Right ventricle myocardium inferior (tissue), 1 donor: ENCODE measurements at regions of chr3 and their contacts with region 1.

Region 1: DNA sequence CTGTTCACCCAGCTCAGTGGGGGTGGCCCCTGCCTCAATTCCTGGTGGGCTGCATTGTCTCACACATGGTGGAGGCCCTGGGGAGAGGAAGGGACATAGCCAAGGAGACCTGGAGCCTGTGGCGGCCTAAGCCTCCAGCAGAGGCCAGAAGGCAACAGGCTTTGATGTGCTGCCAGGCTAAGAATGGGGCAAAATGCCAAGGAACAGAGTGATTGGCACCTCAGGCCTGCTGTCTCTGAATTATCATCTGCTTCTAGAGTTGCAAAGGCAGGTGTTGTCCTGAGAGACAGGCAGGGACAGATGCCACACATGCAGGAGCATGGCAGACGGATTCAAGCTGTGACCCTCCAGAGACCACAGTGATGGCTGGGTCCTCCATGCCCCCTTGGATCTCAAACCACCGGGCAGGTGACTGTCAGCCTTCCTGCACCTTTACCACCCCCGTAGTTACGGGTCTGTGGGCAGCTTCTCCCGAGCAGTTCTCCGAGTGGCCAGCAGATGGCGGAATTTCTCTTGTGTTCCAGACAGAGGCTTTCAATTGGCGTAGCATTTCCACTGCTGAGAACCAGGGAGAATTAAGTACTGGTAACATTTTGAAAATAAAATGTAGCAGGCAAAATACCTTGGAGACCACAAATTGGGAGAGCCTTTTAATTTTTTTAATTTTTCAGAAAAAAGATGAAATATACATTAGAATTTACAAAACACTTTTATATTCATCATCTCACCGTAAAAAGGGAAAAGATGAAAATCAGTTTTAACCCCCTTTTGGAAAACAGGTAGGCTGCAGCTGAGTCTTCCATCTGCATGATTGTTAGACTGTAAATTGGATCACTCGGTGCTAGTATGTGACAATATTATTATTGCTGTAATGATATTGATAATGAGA is 525.5 kb upstream of the CFAP20DC start:
- DNase-seq: peak; percentile 89
- ATAC-seq: peak; percentile 60

Region 2: DNA sequence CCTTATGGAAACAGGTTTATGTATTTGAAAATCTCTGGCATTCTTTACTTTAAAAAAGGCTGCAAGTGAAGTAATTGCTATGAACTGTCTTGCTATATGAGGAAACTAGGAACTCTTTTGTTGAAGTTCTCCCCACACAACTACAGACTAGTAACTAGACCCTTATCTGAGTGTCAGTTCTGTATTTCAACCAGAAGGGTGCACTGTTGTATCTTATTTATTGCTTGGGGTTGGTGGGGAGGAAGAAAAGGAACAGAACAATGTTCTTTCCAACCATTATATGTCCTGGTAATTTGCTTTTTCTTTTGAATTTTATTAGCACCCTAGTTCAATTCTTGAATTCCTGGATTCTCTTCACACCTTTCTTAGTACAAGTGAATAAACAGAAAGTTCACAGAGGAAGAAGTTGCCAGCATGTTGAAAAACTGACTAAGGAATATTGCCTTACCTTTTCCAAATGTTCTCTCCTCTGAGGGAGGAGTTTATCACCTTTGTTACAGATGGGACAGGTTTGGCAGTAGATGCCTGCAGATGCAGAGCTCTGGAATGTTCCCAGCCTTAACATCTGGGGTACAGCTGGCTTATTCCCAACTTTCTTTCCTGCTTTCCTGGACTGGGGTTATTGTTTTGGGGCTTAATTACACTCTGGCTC is 363.1 kb before region 1 on chr3:
- intact Hi-C with region 1: loop called (anchors 1 kb)
- DNase-seq: no peak
- ATAC-seq: peak; percentile 60

Region 3: DNA sequence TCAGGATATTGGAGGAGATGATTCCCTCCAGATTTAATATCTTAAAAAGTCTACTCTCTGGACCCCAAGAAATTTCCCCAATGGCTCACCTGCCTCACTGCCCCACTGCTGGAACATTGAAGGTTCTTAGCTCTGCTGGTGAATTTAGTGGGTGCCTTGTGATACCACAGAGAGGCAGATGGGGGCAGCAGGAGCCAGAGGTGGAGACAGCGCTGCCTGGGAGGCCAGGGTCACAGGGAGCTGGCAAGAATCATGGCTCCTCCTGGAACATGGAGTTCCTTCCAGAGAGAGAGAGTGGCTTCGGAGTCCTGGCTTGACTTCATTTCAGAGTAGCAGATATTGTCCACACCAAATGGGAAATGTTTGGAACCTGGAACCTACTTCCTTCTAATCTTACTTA is 262.0 kb before region 1 on chr3:
- intact Hi-C with region 1: loop called (anchors 5 kb)
- DNase-seq: peak; percentile 68
- ATAC-seq: peak; percentile 94

Region 4: GRCh38 chr3:59607656-59608055 is 32.3 kb after region 1 on chr3:
- intact Hi-C with region 1: loop called (anchors 2 kb)
- DNase-seq: no peak
- ATAC-seq: peak; percentile 53

Region 5: GRCh38 chr3:59809710-59810444 is 234.5 kb after region 1 on chr3:
- intact Hi-C with region 1: loop called (anchors 5 kb)
- DNase-seq: no peak
- ATAC-seq: peak; percentile 51

Region 6: DNA sequence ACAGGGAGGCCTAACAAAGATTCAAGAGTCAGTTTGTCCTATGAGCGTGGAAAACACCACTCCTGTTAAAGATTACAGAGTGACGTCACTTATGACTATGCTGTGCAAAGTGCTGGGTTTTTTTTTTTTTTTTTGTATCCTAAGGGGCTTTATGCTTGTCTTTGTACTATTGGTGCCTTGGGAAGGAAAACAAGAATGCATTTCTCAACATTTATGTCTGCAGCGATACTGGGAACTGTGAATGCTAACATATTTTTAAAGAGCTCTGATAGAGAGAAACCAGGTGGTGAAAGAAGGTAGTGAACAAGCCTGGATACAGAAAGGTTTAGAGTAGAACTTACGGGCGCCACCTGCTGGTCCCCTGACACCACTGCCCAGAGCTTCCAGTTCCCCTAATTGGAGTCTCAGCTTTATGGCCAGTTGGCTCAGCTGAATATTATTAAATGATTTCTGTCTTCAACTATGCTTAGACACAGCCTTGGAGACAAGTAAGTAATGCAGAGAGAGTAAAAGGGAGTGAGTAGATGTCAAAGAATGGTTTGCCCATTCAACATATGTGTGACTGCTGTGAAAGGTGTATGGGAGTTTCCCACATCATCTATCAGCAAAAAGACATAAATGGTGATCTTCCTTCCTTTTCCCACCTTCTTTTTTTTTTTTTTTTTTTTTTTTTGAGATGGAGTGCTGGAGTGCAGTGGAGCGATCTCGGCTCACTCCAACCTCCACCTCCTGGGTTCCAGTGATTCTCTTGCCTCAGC is 282.4 kb after region 1 on chr3:
- intact Hi-C with region 1: loop called (anchors 1 kb)
- DNase-seq: peak; percentile 74
- ATAC-seq: peak; percentile 94